ENCODE measurements at regions of chr4 and their contacts with region 1.

Region 1: DNA sequence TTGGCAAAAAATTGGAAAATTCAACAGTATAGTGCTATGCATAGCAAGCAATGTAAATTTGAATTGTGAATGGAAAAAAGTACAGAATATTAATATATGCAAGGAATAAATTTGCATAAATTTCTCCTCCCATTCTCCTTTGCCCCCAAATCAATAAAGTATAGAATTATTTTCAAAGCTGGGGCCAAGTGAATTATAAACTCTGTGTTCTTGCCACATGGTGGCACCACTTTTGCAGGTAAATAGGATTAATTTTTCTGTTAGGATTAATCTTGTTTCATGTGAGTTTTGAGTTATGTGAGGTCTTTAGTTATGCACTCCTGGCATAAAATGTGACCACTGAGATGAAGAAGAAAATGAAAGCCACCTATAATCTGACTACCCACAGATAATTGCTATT is 19.9 kb downstream of the COPS4 start:
- DNase-seq: peak; percentile 23
- CTCF ChIP-seq: peak; percentile 40

Region 2: GRCh38 chr4:83019794-83020494 is 35.0 kb before region 1 on chr4:
- CTCF ChIA-PET with region 1: no interaction called
- POLR2A ChIA-PET with region 1: no interaction called
- DNase-seq: no peak
- CTCF ChIP-seq: no peak

Region 3: GRCh38 chr4:83040269-83040668 is 14.7 kb before region 1 on chr4:
- CTCF ChIA-PET with region 1: interaction called, 12 read pairs
- POLR2A ChIA-PET with region 1: no interaction called
- DNase-seq: no peak
- CTCF ChIP-seq: no peak

Region 4: DNA sequence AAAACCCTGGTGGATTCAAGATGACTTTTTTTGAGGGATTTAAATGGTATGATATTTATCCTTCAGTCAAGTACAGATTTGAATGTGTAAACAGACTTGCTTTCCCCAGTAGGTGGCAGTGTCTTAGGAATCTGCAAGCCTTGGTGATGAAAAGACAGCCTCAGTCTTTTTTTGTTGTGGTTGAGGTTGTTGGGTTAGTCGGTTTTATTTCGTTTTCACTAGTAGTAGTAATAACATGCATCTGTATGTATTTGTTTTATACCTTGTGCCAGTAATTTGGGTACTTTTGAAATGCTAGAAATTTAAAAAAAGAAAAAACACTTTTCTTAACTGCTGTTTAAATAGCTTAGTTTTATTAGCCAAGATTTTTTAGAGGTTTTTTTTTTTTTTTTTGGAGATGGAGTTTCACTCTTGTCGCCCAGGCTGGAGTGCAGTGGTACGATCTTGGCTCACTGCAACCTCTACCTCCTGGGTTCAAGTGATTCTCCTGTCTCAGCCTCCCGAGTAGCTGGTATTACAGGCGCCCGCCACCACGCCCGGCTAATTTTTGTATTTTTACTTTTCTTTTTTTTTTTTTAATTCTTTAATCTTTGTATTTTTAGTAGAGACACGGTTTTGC is 19.3 kb after region 1 on chr4:
- CTCF ChIA-PET with region 1: interaction called, 10 read pairs
- POLR2A ChIA-PET with region 1: no interaction called
- DNase-seq: peak; percentile 80
- CTCF ChIP-seq: peak; percentile 61

Measured in GM10248 (cell line).